CD4-positive, alpha-beta memory T cell (primary cell): ENCODE measurements at regions of chr10 and their contacts with region 1.

Region 1: GRCh38 chr10:96642973-96643372 is 56.2 kb upstream of the TM9SF3 start:
- DNase-seq: peak in 4 of 5 donors; percentile 8 to 44 (median 16)
- H3K4me3 ChIP-seq: no peak overlapping the region
- H3K4me3 Mint-ChIP-seq: no peak overlapping the region
- H3K27ac ChIP-seq: no peak overlapping the region
- H3K27ac Mint-ChIP-seq: no peak overlapping the region
- H3K4me1 ChIP-seq: peaks cover 5% of the 10 kb centered on the region
- H3K4me1 Mint-ChIP-seq: peaks cover 5 to 20% (median 13%) of the 10 kb centered on the region in 4 donors
- H3K27me3 ChIP-seq: no peaks in the 10 kb centered on the region
- H3K27me3 Mint-ChIP-seq: no peaks in the 10 kb centered on the region

Region 2: DNA sequence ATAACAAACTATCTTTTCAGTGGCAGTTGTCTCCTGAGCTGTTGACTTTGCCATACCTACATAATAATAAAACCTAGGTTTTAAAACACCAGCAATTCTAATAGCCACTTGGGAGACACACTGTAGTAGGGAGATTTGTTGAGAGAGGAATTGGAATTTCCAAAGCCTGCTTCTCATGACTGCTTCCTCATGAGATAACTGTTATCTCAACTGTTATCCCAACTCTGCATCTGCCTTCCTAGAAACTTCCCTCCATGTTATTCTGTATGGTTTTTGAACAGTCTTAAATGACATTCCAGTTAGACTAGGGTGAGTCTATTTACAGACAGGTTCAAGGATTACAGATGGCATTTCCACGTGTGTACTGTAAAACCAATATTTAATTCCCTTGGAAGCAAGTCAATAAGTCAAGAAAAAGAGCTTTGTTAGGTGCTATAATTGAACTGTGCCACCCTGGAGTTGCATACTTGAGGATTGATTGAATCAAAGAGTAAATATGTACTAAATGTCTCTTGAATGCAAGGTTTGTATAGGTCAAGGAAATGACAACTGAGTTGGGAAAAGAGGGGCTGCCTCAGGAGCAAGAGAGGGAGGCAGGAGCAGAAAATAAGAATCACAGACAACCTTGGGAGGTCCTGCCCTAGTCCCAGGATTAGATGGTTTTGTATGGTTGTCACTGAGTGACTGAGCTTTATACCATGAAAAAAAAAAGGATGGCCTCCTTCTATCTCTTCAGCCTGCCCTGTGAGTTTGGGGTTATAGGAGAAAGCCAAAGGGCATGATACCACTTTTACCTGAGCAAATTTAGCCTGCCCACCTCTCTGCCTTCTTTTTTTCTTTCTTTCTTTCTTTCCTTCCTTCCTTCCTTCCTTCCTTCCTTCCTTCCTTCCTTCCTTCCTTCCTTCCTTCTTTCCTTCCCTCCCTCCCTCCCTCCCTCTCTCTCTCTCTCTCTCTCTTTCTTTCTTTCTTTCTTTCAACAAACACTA is 46.3 kb before region 1 on chr10:
- CTCF ChIA-PET with region 1: no interaction called
- POLR2A ChIA-PET with region 1: no interaction called
- intact Hi-C with region 1: no loop called
- DNase-seq: no peak
- H3K4me3 ChIP-seq: no peak overlapping the region
- H3K4me3 Mint-ChIP-seq: no peak overlapping the region
- H3K27ac ChIP-seq: no peak overlapping the region
- H3K27ac Mint-ChIP-seq: no peak overlapping the region
- H3K4me1 ChIP-seq: no peaks in the 10 kb centered on the region
- H3K4me1 Mint-ChIP-seq: peaks cover 2 to 4% (median 3%) of the 10 kb centered on the region in 4 donors
- H3K27me3 ChIP-seq: no peaks in the 10 kb centered on the region
- H3K27me3 Mint-ChIP-seq: peaks cover 0 to 3% of the 10 kb centered on the region in 2 donors

Region 3: GRCh38 chr10:96660297-96660696 is 17.3 kb after region 1 on chr10:
- CTCF ChIA-PET with region 1: no interaction called
- POLR2A ChIA-PET with region 1: no interaction called
- intact Hi-C with region 1: no loop called
- DNase-seq: no peak
- H3K4me3 ChIP-seq: no peak overlapping the region
- H3K4me3 Mint-ChIP-seq: no peak overlapping the region
- H3K27ac ChIP-seq: no peak overlapping the region
- H3K27ac Mint-ChIP-seq: no peak overlapping the region
- H3K4me1 ChIP-seq: no peaks in the 10 kb centered on the region
- H3K4me1 Mint-ChIP-seq: no peaks in the 10 kb centered on the region
- H3K27me3 ChIP-seq: no peaks in the 10 kb centered on the region
- H3K27me3 Mint-ChIP-seq: no peaks in the 10 kb centered on the region

Region 4: GRCh38 chr10:96719850-96720421 is 77.0 kb after region 1 on chr10:
- CTCF ChIA-PET with region 1: no interaction called
- POLR2A ChIA-PET with region 1: no interaction called
- intact Hi-C with region 1: loop called (anchors 5 kb)
- DNase-seq: peak in 4 of 5 donors; percentile 5 to 44 (median 12)
- H3K4me3 ChIP-seq: peak overlapping the region in 1 of 2 donors; percentile 61
- H3K4me3 Mint-ChIP-seq: peak overlapping the region; percentile 89 to 97 (median 92)
- H3K27ac ChIP-seq: no peak overlapping the region
- H3K27ac Mint-ChIP-seq: peak overlapping the region in 5 of 7 donors; percentile 44 to 84 (median 71)
- H3K4me1 ChIP-seq: peaks cover 15% of the 10 kb centered on the region
- H3K4me1 Mint-ChIP-seq: peaks cover 12 to 20% (median 16%) of the 10 kb centered on the region in 4 donors
- H3K27me3 ChIP-seq: no peaks in the 10 kb centered on the region
- H3K27me3 Mint-ChIP-seq: no peaks in the 10 kb centered on the region

Region 5: DNA sequence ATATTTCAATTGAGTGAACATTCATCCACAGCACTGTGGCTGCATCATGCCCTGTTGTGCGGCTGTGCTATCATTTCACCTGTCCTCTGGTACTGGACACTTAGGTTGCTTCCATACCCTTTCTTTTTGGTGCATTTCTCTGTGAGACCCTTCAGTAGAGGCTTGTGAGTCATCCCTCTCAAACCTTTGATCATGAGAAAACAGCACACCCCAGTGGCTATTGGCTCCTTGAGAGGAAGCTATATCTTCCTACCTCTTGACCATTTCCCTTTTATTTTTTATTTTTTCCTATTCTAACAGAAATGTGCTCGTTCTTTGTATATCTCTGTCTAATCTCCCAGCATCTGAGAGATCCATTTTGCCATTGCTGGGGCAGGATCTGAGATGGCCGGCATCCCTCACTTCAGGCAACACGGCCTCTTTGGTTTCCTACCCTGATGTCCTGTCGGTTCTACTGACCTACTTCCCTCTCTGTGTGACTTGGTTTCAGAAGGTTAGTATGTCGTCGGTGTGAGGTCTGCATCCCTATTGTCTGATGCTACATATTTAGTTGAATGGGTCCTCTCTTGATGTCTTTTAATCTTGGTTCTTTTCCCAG is 101.1 kb after region 1 on chr10:
- CTCF ChIA-PET with region 1: no interaction called
- POLR2A ChIA-PET with region 1: no interaction called
- intact Hi-C with region 1: loop called (anchors 5 kb)
- DNase-seq: no peak
- H3K4me3 ChIP-seq: no peak overlapping the region
- H3K4me3 Mint-ChIP-seq: no peak overlapping the region
- H3K27ac ChIP-seq: no peak overlapping the region
- H3K27ac Mint-ChIP-seq: peak overlapping the region in 2 of 7 donors; percentile 14 to 79
- H3K4me1 ChIP-seq: no peaks in the 10 kb centered on the region
- H3K4me1 Mint-ChIP-seq: peaks cover 0 to 8% (median under 1%) of the 10 kb centered on the region in 4 donors
- H3K27me3 ChIP-seq: no peaks in the 10 kb centered on the region
- H3K27me3 Mint-ChIP-seq: peaks cover 0 to 5% of the 10 kb centered on the region in 2 donors

Region 6: DNA sequence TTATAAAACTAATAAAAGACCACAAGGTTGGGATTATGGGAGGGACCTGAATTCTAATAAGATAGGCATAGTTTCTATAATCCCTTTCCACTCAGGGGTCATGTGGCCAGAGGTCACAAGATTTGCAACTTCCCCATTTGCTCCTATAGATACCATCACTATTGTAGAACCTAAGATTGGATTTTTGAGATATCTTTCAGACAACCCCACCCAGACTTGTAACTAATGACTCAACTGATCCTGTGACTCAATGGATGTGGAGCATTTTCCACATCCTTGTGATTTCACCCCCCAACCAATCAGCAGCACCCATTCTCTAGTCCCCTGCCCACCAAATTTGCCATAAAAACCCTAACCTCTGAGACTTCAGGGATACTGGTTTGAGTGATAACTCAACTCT is 129.2 kb after region 1 on chr10:
- CTCF ChIA-PET with region 1: no interaction called
- POLR2A ChIA-PET with region 1: no interaction called
- intact Hi-C with region 1: no loop called
- DNase-seq: no peak
- H3K4me3 ChIP-seq: no peak overlapping the region
- H3K4me3 Mint-ChIP-seq: no peak overlapping the region
- H3K27ac ChIP-seq: no peak overlapping the region
- H3K27ac Mint-ChIP-seq: no peak overlapping the region
- H3K4me1 ChIP-seq: no peaks in the 10 kb centered on the region
- H3K4me1 Mint-ChIP-seq: no peaks in the 10 kb centered on the region
- H3K27me3 ChIP-seq: no peaks in the 10 kb centered on the region
- H3K27me3 Mint-ChIP-seq: peaks cover 0 to 1% of the 10 kb centered on the region in 2 donors

Region 7: DNA sequence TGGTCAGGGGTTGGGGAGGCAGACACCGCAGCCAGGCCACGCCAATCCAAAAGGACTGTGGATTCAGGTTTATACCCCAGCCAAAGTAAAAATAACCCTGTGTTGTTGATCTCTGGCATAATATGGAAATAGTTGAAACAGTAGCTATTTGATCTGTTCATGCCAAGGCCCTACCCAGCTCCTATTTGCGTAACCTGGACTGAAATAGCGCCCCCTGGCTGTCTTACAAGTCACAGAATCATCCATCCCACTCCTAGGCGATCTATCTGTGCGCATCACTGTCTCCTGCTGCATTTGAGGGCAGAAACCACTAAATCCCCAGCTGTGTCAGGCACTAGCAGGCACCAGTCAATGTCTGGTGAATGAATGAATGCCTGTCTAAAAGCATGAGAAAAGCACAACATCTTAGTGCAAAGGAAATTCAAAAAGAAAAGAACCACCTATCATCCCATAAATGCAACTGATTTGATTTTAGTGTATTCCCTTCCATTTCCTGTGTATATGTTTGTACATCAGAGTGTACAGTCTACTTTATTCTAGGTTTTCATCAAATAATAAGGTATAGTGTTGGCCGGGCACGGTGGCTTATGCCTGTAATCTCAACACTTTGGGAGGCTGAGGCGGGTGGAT is 382.8 kb after region 1 on chr10:
- CTCF ChIA-PET with region 1: interaction called, 10 read pairs
- POLR2A ChIA-PET with region 1: no interaction called
- intact Hi-C with region 1: loop called (anchors 5 kb)
- DNase-seq: peak in 4 of 5 donors; percentile 30 to 39 (median 34)
- H3K4me3 ChIP-seq: no peak overlapping the region
- H3K4me3 Mint-ChIP-seq: no peak overlapping the region
- H3K27ac ChIP-seq: no peak overlapping the region
- H3K27ac Mint-ChIP-seq: no peak overlapping the region
- H3K4me1 ChIP-seq: no peaks in the 10 kb centered on the region
- H3K4me1 Mint-ChIP-seq: no peaks in the 10 kb centered on the region
- H3K27me3 ChIP-seq: no peaks in the 10 kb centered on the region
- H3K27me3 Mint-ChIP-seq: peaks cover 0 to 3% of the 10 kb centered on the region in 2 donors